Activated CD8-positive, alpha-beta T cell treated with anti-CD3 and anti-CD28 coated beads, Interleukin-2, amount 10 ng/mL, durations not matched to agents 7 days and 5 days (primary cell): ENCODE measurements at regions of chr6 and their contacts with region 1.

Region 1: DNA sequence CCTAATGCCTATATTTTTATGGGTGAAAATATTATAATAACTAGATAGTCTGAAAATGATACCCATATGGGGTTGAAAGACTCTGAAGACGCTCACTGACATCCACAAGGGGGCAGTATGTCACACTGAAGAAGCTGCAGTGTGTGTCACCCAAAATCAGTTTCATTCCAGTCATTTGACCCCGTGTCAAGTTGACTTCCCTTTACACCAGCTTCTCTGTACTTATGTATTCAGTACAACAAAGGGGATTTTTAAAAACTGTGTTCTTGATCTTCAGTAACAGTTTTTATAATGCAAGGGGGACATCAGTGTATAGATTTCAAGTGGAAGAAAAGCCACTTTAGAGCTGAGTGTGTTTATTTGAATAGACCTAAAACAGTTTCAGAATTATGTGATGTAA is 19.3 kb downstream of the FAXC start:
- DNase-seq: peak; percentile 76
- ATAC-seq: peak; percentile 92
- H3K4me3 Mint-ChIP-seq: no peak overlapping the region
- H3K27ac Mint-ChIP-seq: no peak overlapping the region
- H3K4me1 Mint-ChIP-seq: peaks cover 3% of the 10 kb centered on the region
- H3K27me3 Mint-ChIP-seq: peaks cover 15% of the 10 kb centered on the region

Region 2: GRCh38 chr6:98957446-98957845 is 372.7 kb before region 1 on chr6:
- CTCF ChIA-PET with region 1: no interaction called
- POLR2A ChIA-PET with region 1: no interaction called
- DNase-seq: no peak
- ATAC-seq: no peak
- H3K4me3 Mint-ChIP-seq: no peak overlapping the region
- H3K27ac Mint-ChIP-seq: no peak overlapping the region
- H3K4me1 Mint-ChIP-seq: no peaks in the 10 kb centered on the region
- H3K27me3 Mint-ChIP-seq: peaks cover 4% of the 10 kb centered on the region

Region 3: DNA sequence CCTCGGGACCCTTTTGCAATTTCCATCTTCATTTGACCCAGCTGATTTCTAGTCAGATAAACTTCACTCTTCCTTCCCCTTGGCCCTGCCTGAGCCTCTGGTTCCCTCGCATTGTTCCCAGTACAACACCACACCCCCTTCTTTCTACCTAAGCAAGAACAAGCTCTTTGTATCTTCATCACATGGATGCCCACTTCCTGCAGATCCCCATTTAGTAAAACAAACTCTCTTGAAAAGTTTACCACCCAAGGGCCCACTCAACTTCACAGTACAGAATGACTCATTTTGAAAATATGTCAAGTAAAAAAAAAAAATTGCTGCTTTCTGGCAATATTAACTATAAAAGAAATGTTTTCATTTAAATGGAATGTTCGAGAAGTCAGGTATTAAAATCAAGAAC is 14.1 kb after region 1 on chr6:
- CTCF ChIA-PET with region 1: interaction called, 28 read pairs
- POLR2A ChIA-PET with region 1: no interaction called
- DNase-seq: no peak
- ATAC-seq: no peak
- H3K4me3 Mint-ChIP-seq: no peak overlapping the region
- H3K27ac Mint-ChIP-seq: no peak overlapping the region
- H3K4me1 Mint-ChIP-seq: no peaks in the 10 kb centered on the region
- H3K27me3 Mint-ChIP-seq: peaks cover 50% of the 10 kb centered on the region

Region 4: DNA sequence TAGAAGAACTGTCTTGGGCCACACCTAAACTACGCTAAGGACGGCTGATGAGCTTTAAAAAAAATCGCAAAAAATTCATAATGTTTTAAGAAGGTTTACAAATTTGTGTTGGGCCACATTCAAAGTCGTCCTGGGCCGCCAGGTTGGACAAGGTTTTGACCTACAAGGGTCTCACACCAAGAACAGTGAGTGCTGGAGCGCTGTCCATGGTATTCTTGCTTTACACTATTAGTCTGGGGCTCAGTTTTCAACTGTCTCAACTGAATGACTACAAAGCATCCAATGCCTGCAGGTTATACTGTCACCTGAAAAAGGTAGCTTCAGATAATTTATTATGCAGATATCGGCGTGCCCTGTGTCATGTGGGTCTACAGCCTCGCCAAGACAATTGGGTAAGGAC is 23.0 kb after region 1 on chr6:
- CTCF ChIA-PET with region 1: interaction called, 11 read pairs
- POLR2A ChIA-PET with region 1: no interaction called
- DNase-seq: no peak
- ATAC-seq: no peak
- H3K4me3 Mint-ChIP-seq: no peak overlapping the region
- H3K27ac Mint-ChIP-seq: no peak overlapping the region
- H3K4me1 Mint-ChIP-seq: no peaks in the 10 kb centered on the region
- H3K27me3 Mint-ChIP-seq: peaks cover 63% of the 10 kb centered on the region

Region 5: GRCh38 chr6:99393698-99394531 is 63.8 kb after region 1 on chr6 and contains the start of gene COQ3:
- CTCF ChIA-PET with region 1: interaction called, 10 read pairs
- POLR2A ChIA-PET with region 1: interaction called, 3 read pairs
- DNase-seq: peak; percentile 74
- ATAC-seq: peak; percentile 87
- H3K4me3 Mint-ChIP-seq: peak within 1 kb of the TSS; percentile 95
- H3K27ac Mint-ChIP-seq: peak within 1 kb of the TSS; percentile 91
- H3K4me1 Mint-ChIP-seq: peaks cover 16% of the 10 kb centered on the region
- H3K27me3 Mint-ChIP-seq: no peaks in the 10 kb centered on the region
- total RNA-seq, gene COQ3: 12.6 to 13.3 TPM

Region 6: DNA sequence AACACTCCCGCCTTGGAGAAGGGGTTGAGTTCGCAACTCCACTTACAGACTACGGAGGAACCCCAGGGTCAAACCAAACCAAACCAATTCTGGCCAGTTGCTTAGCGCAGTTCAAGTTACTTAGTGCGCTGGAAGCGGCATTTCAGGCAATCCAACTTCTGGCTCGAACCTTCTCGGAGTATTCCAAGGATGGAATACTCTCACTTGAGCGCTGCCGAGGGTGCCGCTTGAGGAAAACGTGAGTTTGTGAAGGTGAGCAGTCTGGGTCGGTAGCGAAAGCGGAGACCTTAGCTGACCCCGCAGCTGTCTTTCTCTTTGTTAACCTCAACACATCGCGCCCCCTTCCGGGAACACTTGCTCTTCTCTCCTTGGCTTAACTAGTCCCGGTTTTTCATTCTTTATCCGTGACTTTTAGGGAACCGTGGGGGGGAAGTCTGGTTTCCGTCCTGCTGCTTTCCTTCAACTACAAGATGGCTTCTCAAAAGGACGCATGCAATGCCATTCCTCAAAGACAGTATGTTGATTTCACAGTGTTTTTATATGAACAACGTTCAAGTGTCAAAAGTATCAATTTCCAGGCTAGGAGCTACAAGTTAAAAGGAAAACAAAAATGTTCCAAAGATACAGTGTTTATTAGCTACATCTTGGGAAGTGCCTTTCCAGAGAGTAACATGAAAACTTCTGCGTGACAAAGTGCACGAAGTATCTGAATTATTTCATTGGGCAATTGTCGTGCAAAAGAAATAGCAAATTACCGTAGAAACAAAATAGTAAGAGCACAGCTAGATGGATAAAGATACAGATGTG is 95.7 kb after region 1 on chr6:
- CTCF ChIA-PET with region 1: interaction called, 14 read pairs
- POLR2A ChIA-PET with region 1: interaction called, 4 read pairs
- DNase-seq: peak; percentile 69
- ATAC-seq: peak; percentile 62
- H3K4me3 Mint-ChIP-seq: peak overlapping the region; percentile 89
- H3K27ac Mint-ChIP-seq: peak overlapping the region; percentile 100
- H3K4me1 Mint-ChIP-seq: peaks cover 55% of the 10 kb centered on the region
- H3K27me3 Mint-ChIP-seq: no peaks in the 10 kb centered on the region